GM12878 (cell line): ENCODE measurements at regions of chr15 and their contacts with region 1.

Region 1: DNA sequence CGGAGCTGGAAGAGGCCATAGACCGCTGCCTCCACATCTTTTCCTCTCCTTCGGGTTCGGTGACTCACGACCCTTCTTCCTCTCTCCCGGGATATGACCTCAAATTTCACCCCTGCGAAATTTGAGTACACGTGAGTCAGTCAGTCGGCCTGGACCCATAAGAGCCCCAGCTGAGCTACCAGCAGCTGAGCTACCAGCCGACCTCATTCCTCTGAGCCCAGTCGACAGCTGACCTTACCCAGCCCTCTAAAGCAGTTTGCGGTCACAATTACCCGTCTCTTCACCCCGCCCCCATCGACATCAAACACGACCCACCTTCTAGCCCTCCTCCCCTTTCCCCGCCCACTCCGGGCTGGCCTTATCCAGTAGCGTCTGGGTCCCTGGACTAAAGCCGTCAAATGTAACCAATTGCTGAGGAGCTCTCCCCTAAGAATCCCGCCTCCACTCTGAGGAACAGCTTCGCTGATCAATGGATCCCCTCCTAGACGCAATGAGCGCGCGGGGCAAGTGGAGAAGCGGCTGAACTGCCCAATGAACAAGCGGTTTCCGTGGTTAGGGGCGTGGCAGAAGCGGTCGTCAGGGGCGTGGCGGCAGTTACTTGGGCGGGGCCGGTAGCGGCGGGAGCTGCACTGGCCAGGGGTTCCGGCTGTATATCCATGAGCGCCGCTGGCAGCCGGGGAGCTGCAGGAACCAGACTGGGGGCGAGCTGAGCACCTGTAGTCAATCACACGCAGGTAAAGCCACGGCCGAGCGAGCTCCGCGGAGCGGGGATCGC is at the start of gene ABHD2:
- DNase-seq: peak; percentile 99
- ATAC-seq: peak; percentile 96
- H3K4me3 ChIP-seq: peak within 1 kb of the TSS; percentile 88
- H3K27ac ChIP-seq: peak within 1 kb of the TSS; percentile 56
- H3K4me1 ChIP-seq: no peaks in the 10 kb centered on the region; the same call in 1 of the 2 replicates
- H3K27me3 ChIP-seq: no peaks in the 10 kb centered on the region
- CTCF ChIP-seq: no peak
- EP300 ChIP-seq: 0 out of 4 replicates have a peak, but pooled peaks of 1 of the 2 experiments have one; percentile 28
- POLR2A ChIP-seq: peak; percentile 84
- RAD21 ChIP-seq: no peak
- polyA plus RNA-seq, gene ABHD2: 1.2 to 4.7 TPM

Region 2: DNA sequence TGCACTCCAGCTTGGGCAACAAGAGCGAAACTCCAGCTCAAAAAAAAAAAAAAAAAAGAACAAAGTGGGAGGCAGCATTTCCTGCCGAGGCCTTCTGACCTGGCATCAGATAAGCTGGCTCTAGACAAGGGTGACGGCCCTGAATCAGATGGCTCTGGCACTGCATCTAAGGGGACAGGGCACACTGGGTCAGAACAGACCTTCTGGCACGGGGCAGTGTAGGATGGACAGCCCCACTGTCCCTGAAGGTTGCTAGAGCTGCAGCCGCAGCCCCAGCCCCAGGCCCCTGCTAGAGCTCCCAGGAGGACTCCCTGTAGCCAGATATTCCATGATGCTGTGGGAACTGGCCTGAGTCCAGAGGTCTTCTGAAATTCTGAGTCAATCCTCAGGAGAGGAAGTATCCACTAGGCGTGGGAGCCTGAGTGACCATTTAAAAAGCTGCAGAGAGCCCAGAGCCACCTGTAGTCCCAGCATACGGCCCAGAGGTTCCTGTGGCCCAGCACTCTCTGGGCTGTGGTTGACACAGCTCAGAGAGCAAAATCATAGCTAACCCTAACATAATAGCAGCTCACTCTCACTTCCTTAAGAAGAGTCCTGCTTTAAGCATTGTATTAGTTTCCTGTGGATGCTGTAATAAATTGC is 105.6 kb before region 1 on chr15:
- CTCF ChIA-PET with region 1: no interaction called
- POLR2A ChIA-PET with region 1: no interaction called
- RAD21 ChIA-PET with region 1: no interaction called
- SMC1A ChIA-PET with region 1: no interaction called
- in situ Hi-C with region 1: no loop called
- intact Hi-C with region 1: no loop called
- DNase-seq: peak; percentile 83
- ATAC-seq: peak; percentile 97
- H3K4me3 ChIP-seq: no peak overlapping the region
- H3K27ac ChIP-seq: no peak overlapping the region
- H3K4me1 ChIP-seq: peaks cover 19% of the 10 kb centered on the region
- H3K27me3 ChIP-seq: no peaks in the 10 kb centered on the region
- CTCF ChIP-seq: no peak
- EP300 ChIP-seq: peak; percentile 56 to 82; a peak in 3 of 4 replicates
- POLR2A ChIP-seq: no peak
- RAD21 ChIP-seq: no peak

Region 3: GRCh38 chr15:89017370-89018066 is 70.5 kb before region 1 on chr15:
- CTCF ChIA-PET with region 1: no interaction called
- POLR2A ChIA-PET with region 1: no interaction called
- RAD21 ChIA-PET with region 1: no interaction called
- SMC1A ChIA-PET with region 1: no interaction called
- in situ Hi-C with region 1: no loop called
- intact Hi-C with region 1: no loop called
- DNase-seq: peak; percentile 48
- ATAC-seq: peak; percentile 95
- H3K4me3 ChIP-seq: no peak overlapping the region
- H3K27ac ChIP-seq: no peak overlapping the region
- H3K4me1 ChIP-seq: no peaks in the 10 kb centered on the region
- H3K27me3 ChIP-seq: peaks cover 1 to 9% of the 10 kb centered on the region in 2 experiments; a peak in 2 of 4 replicates
- CTCF ChIP-seq: peak; percentile 79 to 86 (median 84)
- EP300 ChIP-seq: 0 out of 4 replicates have a peak, but pooled peaks of 1 of the 2 experiments have one; percentile 14
- POLR2A ChIP-seq: no peak
- RAD21 ChIP-seq: peak; percentile 72

Region 4: GRCh38 chr15:89041507-89041906 is 46.5 kb before region 1 on chr15:
- CTCF ChIA-PET with region 1: no interaction called
- POLR2A ChIA-PET with region 1: no interaction called
- RAD21 ChIA-PET with region 1: no interaction called
- SMC1A ChIA-PET with region 1: no interaction called
- in situ Hi-C with region 1: no loop called
- intact Hi-C with region 1: no loop called
- DNase-seq: no peak
- ATAC-seq: no peak
- H3K4me3 ChIP-seq: no peak overlapping the region
- H3K27ac ChIP-seq: no peak overlapping the region
- H3K4me1 ChIP-seq: no peaks in the 10 kb centered on the region
- H3K27me3 ChIP-seq: no peaks in the 10 kb centered on the region
- CTCF ChIP-seq: no peak
- EP300 ChIP-seq: no peak
- POLR2A ChIP-seq: no peak
- RAD21 ChIP-seq: no peak

Region 5: GRCh38 chr15:89112341-89112971 is 24.4 kb after region 1 on chr15:
- CTCF ChIA-PET with region 1: interaction called, 33 read pairs
- POLR2A ChIA-PET with region 1: interaction called, 19 read pairs
- RAD21 ChIA-PET with region 1: interaction called, 72 read pairs
- SMC1A ChIA-PET with region 1: interaction called, 123 read pairs
- in situ Hi-C with region 1: no loop called
- intact Hi-C with region 1: loop called (anchors 2 kb)
- DNase-seq: peak; percentile 38
- ATAC-seq: peak; percentile 99
- H3K4me3 ChIP-seq: no peak overlapping the region
- H3K27ac ChIP-seq: peak overlapping the region; percentile 23
- H3K4me1 ChIP-seq: peaks cover 8% of the 10 kb centered on the region; the same call in 1 of the 2 replicates
- H3K27me3 ChIP-seq: no peaks in the 10 kb centered on the region
- CTCF ChIP-seq: no peak
- EP300 ChIP-seq: peak; percentile 66 to 74; a peak in 3 of 4 replicates
- POLR2A ChIP-seq: no peak
- RAD21 ChIP-seq: no peak